Sciatic nerve (tissue), 2 donors: ENCODE measurements at regions of chr22 and their contacts with region 1.

Region 1: GRCh38 chr22:46542011-46542985 is 4.9 kb upstream of the CELSR1 start:
- DNase-seq: peak; percentile 81
- ATAC-seq: peak; percentile 93

Region 2: DNA sequence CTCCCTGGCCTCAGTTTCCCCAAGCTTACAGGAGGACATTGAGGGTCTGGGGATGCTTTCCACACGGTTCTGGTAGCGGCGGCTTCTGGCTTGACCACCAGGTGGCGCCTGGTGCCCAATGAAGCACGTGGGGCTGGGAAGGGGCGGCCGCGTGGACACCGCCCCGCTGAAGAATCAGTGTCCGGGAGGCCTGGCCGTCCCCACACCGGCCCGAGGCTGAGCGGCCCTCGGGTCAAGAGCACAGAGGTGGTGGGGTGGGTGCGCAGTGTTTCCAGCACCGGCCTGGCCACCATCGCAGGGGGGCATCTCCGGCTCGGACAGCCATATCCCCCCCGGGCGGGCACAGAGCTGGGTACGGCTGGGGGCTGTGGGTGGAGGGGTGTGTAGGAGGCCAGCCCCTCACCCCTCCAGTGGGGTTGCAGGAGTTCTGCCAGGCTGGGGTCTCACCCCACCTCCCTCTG is 419.8 kb before region 1 on chr22:
- intact Hi-C with region 1: loop called (anchors 10 kb)
- DNase-seq: peak; percentile 92
- ATAC-seq: peak; percentile 58

Region 3: GRCh38 chr22:46355371-46355995 is 186.8 kb before region 1 on chr22:
- intact Hi-C with region 1: loop called (anchors 5 kb)
- DNase-seq: peak; percentile 83
- ATAC-seq: peak; percentile 59

Region 4: GRCh38 chr22:46563381-46564083 is 21.2 kb after region 1 on chr22:
- intact Hi-C with region 1: no loop called
- DNase-seq: peak; percentile 87
- ATAC-seq: peak; percentile 93